Mammary epithelial cell (primary cell): ENCODE measurements at regions of chr6 and their contacts with region 1.

Region 1: GRCh38 chr6:46704562-46704961 is 16.9 kb downstream of the TDRD6 start:
- DNase-seq: peak; percentile 45
- H3K4me3 ChIP-seq: no peak overlapping the region
- H3K27ac ChIP-seq: no peak overlapping the region
- H3K4me1 ChIP-seq: peaks cover 11% of the 10 kb centered on the region
- H3K27me3 ChIP-seq: no peaks in the 10 kb centered on the region
- CTCF ChIP-seq: peak; percentile 31 to 49

Region 2: GRCh38 chr6:46465294-46466165 is 239.0 kb before region 1 on chr6:
- CTCF ChIA-PET with region 1: no interaction called
- dilution Hi-C with region 1: no loop called
- in situ Hi-C with region 1: no loop called
- intact Hi-C with region 1: no loop called
- DNase-seq: peak; percentile 42
- H3K4me3 ChIP-seq: no peak overlapping the region
- H3K27ac ChIP-seq: no peak overlapping the region
- H3K4me1 ChIP-seq: peaks cover 8% of the 10 kb centered on the region
- H3K27me3 ChIP-seq: no peaks in the 10 kb centered on the region
- CTCF ChIP-seq: no peak

Region 3: DNA sequence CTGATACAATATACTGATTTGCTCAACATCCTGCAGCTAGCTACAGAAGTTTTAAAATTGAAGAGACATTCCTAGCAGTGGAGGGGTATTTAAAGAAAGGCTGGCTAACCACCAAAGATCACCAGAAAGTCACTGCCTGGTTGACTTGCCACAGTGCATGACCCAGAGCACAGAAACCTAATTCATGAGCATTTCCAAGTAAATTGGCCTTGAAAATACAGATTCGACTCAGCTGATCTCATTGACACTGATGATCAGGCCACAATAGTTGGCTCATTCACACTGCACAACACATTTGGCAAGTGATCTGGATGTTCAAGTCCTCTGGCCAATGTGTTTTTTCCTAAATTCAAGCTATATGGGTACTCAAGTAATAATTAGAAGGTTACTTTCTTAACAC is 30.2 kb before region 1 on chr6:
- CTCF ChIA-PET with region 1: no interaction called
- dilution Hi-C with region 1: no loop called
- in situ Hi-C with region 1: no loop called
- intact Hi-C with region 1: no loop called
- DNase-seq: no peak
- H3K4me3 ChIP-seq: no peak overlapping the region
- H3K27ac ChIP-seq: no peak overlapping the region
- H3K4me1 ChIP-seq: no peaks in the 10 kb centered on the region
- H3K27me3 ChIP-seq: no peaks in the 10 kb centered on the region
- CTCF ChIP-seq: no peak

Region 4: DNA sequence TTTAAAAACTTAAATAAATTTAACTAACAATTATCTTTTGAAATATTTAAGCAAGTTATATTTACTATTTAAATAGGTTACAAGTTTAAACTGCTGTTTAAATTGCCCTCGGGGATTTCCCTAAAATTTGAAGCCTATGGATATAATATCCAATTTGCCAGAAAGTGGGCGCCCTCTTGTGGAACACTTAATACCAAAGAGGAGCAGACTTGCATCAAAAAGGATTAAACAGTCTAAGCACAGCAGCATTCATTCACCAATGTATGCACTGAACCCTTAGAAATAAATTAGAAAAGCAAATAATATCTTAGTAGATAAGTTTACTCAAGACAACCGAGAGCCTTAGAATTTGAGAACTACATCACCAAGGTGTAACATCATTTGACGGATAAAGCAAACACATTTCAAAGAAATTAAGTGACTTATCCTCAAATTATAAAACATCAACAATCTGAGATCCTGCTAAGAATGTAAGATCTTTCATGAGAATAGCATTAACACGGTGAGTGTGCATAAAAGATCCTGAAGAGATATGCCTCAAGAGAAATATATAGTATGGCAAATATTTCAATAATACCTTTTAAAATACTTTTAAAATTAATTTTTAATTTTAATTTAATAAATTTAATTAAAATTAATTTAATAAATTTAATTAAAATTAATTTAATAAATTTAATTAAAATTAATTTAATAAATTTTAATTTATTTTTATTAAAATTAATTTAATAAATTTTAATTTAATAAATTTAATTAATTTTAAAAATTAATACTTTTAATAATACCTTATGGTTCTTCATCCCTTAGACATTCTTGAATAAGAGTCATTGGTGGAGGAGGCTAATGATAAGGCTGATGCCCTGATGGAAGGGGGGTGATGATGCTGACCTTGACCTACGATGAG is 77.2 kb after region 1 on chr6:
- CTCF ChIA-PET with region 1: no interaction called
- dilution Hi-C with region 1: loop called (anchors 5 kb)
- in situ Hi-C with region 1: loop called in 1 of 2 experiments (anchors 10 kb)
- intact Hi-C with region 1: loop called (anchors 1 kb)
- DNase-seq: peak; percentile 57
- H3K4me3 ChIP-seq: no peak overlapping the region
- H3K27ac ChIP-seq: no peak overlapping the region
- H3K4me1 ChIP-seq: no peaks in the 10 kb centered on the region
- H3K27me3 ChIP-seq: no peaks in the 10 kb centered on the region
- CTCF ChIP-seq: peak; percentile 70 to 78

Region 5: DNA sequence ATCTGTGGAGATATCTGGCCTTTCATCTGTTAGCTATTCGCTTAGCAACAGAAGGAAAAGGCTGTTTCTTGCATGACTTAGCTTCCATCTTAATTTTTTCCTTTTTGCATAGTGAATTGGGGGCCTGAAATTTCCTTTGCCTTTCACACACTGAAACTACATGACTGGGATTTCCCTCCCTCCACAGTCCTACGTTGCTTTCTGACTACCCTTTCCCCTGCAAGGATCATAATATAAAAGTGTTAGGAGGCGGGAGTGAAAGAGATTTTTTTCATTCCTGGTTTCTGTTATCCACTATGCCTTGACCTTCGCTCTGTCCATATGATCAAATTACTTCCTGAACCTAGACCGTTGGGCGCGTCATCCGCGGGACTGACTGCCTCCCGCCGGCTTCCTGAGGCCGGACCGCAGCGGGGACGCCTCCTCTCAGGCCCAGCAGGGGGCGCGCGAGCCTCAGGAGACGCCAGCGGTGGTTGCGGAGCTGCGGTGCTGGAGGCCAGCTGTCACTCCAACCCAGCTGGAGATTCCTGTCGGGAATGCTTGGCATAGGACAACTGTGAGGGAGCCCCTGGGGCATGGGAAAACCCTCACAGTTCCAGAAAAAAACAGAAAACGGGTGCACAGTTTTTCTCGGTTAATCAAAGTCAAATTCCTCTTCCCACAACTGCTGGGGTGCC is 144.3 kb after region 1 on chr6:
- CTCF ChIA-PET with region 1: interaction called, 4 read pairs
- dilution Hi-C with region 1: no loop called
- in situ Hi-C with region 1: no loop called
- intact Hi-C with region 1: loop called (anchors 1 kb)
- DNase-seq: peak; percentile 73
- H3K4me3 ChIP-seq: no peak overlapping the region
- H3K27ac ChIP-seq: no peak overlapping the region
- H3K4me1 ChIP-seq: peaks cover 15% of the 10 kb centered on the region
- H3K27me3 ChIP-seq: no peaks in the 10 kb centered on the region
- CTCF ChIP-seq: peak; percentile 69 to 96

Region 6: DNA sequence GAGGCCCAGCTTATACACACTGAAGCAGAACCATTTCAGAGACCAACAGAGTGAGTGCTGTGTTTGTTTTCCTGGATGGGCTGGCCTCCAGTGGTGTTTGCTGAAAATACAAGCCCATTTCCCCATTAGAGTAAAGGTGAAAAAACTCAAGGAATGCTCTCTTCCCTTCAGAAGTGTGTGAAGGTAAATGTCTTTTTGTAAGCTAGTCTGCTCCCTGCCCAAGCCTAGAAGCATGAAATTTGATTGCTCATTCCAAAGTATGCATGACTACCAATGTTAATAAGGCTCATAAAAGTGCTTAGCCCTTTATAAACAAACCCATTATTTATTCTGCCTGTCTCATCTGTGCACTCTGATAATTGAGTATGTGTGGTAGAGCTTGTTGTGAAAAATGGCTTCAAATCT is 278.4 kb after region 1 on chr6:
- CTCF ChIA-PET with region 1: no interaction called
- dilution Hi-C with region 1: loop called (anchors 25 kb)
- in situ Hi-C with region 1: loop called (anchors 25 kb)
- intact Hi-C with region 1: no loop called
- DNase-seq: peak; percentile 85
- H3K4me3 ChIP-seq: no peak overlapping the region
- H3K27ac ChIP-seq: peak overlapping the region; percentile 67
- H3K4me1 ChIP-seq: peaks cover 34% of the 10 kb centered on the region
- H3K27me3 ChIP-seq: no peaks in the 10 kb centered on the region
- CTCF ChIP-seq: peak; percentile 9 to 18

Region 7: DNA sequence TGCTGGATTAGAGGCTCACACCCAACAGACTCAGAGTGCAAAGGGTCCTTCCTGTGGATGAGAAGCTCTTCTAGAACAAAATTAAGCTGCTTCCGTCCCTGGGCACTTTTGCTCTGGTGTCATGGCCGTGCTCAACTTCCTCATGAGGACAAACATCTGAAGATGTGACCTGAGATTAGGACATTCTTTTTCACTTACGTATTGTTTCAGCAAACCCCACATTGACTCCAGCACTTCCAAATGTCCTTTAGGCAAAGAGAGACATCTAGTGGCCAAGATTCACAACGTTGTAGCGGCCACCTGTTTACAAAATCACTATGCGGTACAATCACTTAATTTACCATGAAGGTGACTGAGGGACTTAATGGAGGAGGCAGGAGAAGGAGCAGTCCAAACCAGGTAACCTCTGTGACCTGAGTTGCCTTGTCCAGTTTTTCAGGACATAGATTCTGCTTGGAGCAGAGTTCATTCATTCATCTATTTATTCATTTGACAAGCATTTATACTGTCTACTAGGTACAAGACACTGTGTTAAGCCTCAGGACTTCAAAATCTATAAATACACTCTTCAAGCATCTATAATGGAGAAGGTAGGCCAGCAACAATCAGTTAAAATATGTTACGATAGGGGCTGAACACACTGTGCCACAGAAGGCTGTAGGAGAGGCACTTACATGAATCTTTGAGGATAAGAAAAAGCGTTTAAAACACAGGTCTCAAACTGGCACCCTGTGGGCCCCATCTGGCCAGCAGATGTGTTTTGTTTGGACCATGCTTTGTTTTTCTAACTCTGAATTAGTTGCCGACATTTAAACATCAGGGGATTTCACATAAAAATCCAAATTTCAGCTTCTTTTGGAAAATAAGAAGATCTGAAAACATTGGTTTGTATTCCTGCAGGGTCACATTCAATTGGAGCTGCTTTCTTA is 343.2 kb after region 1 on chr6:
- CTCF ChIA-PET with region 1: no interaction called
- dilution Hi-C with region 1: no loop called
- in situ Hi-C with region 1: no loop called
- intact Hi-C with region 1: loop called (anchors 1 kb)
- DNase-seq: peak; percentile 75
- H3K4me3 ChIP-seq: no peak overlapping the region
- H3K27ac ChIP-seq: peak overlapping the region; percentile 37
- H3K4me1 ChIP-seq: peaks cover 44% of the 10 kb centered on the region
- H3K27me3 ChIP-seq: no peaks in the 10 kb centered on the region
- CTCF ChIP-seq: peak; percentile 83 to 86

Region 8: DNA sequence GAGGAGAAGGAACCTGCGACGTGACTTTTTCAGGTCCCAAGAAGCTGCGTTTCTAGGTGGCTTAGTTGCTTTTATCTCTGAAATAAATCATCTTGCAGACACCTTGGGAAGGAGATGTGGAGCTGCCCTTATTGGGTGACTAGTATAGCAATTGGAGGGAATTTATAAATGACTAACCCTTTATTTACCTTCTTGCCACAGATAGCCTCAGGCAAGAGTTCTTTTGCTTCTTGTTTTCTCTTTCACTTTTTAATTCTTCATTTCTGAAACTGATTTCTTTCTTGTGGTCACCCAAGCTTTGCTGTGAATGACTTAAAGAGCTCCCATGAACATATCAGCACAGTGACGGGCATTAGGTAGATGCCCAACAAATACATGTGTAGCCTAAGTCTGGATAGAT is 996.8 kb after region 1 on chr6:
- CTCF ChIA-PET with region 1: no interaction called
- dilution Hi-C with region 1: no loop called
- in situ Hi-C with region 1: no loop called
- intact Hi-C with region 1: loop called (anchors 5 kb)
- DNase-seq: peak; percentile 88
- H3K4me3 ChIP-seq: no peak overlapping the region
- H3K27ac ChIP-seq: peak overlapping the region; percentile 93
- H3K4me1 ChIP-seq: peaks cover 49% of the 10 kb centered on the region
- H3K27me3 ChIP-seq: no peaks in the 10 kb centered on the region
- CTCF ChIP-seq: no peak